GM12878 (cell line): ENCODE measurements at regions of chr5 and their contacts with region 1.

Region 1: GRCh38 chr5:90264689-90265544 is 144.6 kb downstream of the CETN3 start:
- DNase-seq: peak; percentile 41
- ATAC-seq: peak; percentile 88
- H3K4me3 ChIP-seq: peak overlapping the region; percentile 26; the same call in 1 of the 2 replicates
- H3K27ac ChIP-seq: no peak overlapping the region
- H3K4me1 ChIP-seq: peaks cover 5% of the 10 kb centered on the region
- H3K27me3 ChIP-seq: no peaks in the 10 kb centered on the region
- CTCF ChIP-seq: peak; percentile 89 to 96 (median 92)
- EP300 ChIP-seq: no peak
- POLR2A ChIP-seq: no peak
- RAD21 ChIP-seq: peak; percentile 99

Region 2: GRCh38 chr5:88724201-88724600 is 1540.7 kb before region 1 on chr5:
- CTCF ChIA-PET with region 1: interaction called, 45 read pairs
- POLR2A ChIA-PET with region 1: no interaction called
- RAD21 ChIA-PET with region 1: interaction called, 39 read pairs
- SMC1A ChIA-PET with region 1: interaction called, 23 read pairs
- in situ Hi-C with region 1: loop called (anchors 5 kb)
- intact Hi-C with region 1: loop called (anchors 2 kb)
- DNase-seq: no peak
- ATAC-seq: peak; percentile 34; the same call in 2 of the 3 replicates
- H3K4me3 ChIP-seq: no peak overlapping the region
- H3K27ac ChIP-seq: no peak overlapping the region
- H3K4me1 ChIP-seq: no peaks in the 10 kb centered on the region
- H3K27me3 ChIP-seq: no peaks in the 10 kb centered on the region
- CTCF ChIP-seq: peak in 1 of 3 experiments; percentile 13; a peak in 2 of 6 replicates
- EP300 ChIP-seq: no peak
- POLR2A ChIP-seq: no peak
- RAD21 ChIP-seq: no peak

Region 3: DNA sequence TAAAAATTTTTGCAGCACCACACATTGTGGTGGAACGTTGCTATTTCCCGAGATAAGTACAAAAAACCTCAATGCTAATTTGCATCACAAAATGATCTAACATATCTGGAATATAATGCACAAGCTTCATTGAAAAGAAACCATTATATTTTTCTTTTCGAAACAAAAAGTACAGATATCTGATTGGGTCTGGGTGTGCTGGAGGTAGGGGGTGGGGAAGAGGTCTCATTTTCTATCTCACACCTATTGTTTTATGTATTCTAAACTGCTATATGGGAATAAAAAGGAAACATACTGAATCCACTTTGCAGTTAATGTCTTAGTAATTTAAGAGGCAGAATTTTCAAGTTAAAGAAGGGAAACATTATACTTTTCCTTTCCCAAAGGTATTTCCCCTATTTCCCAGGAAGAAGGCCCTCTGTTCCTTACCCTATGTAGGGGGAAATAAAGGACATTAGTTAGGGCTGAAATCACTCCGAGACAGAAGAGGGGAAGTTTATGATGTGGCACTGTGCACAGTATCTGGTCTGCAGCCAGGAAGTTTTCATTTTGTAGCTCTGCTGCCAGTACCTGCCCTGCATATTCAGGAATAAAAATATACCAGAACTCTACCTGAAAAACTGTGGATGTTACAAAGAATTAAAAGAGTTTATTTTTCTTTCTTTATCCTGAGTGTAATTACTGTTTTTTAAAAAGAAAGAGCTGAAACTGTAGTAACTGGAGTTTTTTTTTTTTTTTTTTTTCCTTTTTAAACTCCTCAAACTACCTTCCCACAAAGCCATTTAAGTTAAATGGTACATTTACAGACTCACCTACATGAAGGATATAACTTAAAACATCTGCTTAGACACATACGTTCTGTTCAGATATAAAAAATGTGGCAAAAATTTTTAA is 1389.3 kb before region 1 on chr5:
- CTCF ChIA-PET with region 1: no interaction called
- POLR2A ChIA-PET with region 1: no interaction called
- RAD21 ChIA-PET with region 1: no interaction called
- SMC1A ChIA-PET with region 1: interaction called, 4 read pairs
- in situ Hi-C with region 1: no loop called
- intact Hi-C with region 1: loop called (anchors 5 kb)
- DNase-seq: no peak
- ATAC-seq: peak; percentile 65
- H3K4me3 ChIP-seq: peak overlapping the region; percentile 65
- H3K27ac ChIP-seq: peak overlapping the region; percentile 67
- H3K4me1 ChIP-seq: no peaks in the 10 kb centered on the region
- H3K27me3 ChIP-seq: no peaks in the 10 kb centered on the region
- CTCF ChIP-seq: no peak
- EP300 ChIP-seq: no peak
- POLR2A ChIP-seq: peak; percentile 22; the same call in 1 of the 2 replicates
- RAD21 ChIP-seq: no peak

Region 4: GRCh38 chr5:89729623-89730301 is 535.2 kb before region 1 on chr5:
- CTCF ChIA-PET with region 1: no interaction called
- POLR2A ChIA-PET with region 1: no interaction called
- RAD21 ChIA-PET with region 1: interaction called, 3 read pairs
- SMC1A ChIA-PET with region 1: no interaction called
- in situ Hi-C with region 1: no loop called
- intact Hi-C with region 1: loop called (anchors 10 kb)
- DNase-seq: peak; percentile 34
- ATAC-seq: peak; percentile 76
- H3K4me3 ChIP-seq: no peak overlapping the region
- H3K27ac ChIP-seq: no peak overlapping the region
- H3K4me1 ChIP-seq: peaks cover 7% of the 10 kb centered on the region; the same call in 1 of the 2 replicates
- H3K27me3 ChIP-seq: no peaks in the 10 kb centered on the region
- CTCF ChIP-seq: peak; percentile 26 to 54 (median 27); a peak in 4 of 6 replicates
- EP300 ChIP-seq: no peak
- POLR2A ChIP-seq: no peak
- RAD21 ChIP-seq: peak; percentile 65

Region 5: DNA sequence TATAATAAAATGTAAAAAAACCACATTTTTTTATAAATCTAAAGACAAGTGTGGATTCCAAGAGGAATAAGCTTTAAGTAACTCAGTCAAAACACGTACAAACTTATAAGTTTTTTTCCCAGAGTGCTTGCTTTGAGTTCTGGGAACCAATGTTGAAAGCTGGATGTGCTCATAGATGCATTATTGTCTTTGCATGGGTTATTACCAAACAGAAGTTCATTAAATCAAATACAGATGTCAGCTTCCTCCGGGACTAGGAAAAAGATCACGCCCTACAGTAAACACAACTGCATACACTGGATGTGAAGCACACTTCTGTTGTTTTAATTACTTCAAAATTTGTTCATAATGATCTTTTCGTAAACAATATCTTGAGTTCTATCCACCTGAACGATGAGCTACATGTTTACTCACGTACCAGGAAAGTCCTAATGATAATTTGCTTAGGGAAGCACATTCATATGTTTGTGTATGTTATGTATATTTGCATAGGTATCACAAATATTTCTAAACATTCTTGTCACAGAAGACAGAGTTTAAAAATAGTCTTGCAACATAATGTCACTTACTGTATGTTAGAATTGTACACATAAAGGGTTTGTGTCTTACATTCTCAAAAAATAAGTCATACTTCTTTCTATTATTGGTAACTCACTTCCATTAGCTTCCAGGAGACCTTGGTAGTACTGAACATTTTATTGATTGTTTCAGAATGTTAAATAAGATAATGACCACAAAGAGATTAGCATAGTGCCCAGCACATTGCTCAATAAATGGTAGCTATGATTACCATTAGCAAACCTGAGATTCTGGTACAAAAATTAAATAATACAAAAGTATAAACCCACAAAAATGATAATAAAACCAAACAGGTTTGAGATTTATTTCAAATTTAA is 282.8 kb before region 1 on chr5:
- CTCF ChIA-PET with region 1: interaction called, 13 read pairs
- POLR2A ChIA-PET with region 1: no interaction called
- RAD21 ChIA-PET with region 1: interaction called, 3 read pairs
- SMC1A ChIA-PET with region 1: no interaction called
- in situ Hi-C with region 1: no loop called
- intact Hi-C with region 1: no loop called
- DNase-seq: no peak
- ATAC-seq: no peak
- H3K4me3 ChIP-seq: no peak overlapping the region
- H3K27ac ChIP-seq: no peak overlapping the region
- H3K4me1 ChIP-seq: no peaks in the 10 kb centered on the region
- H3K27me3 ChIP-seq: no peaks in the 10 kb centered on the region
- CTCF ChIP-seq: no peak
- EP300 ChIP-seq: no peak
- POLR2A ChIP-seq: no peak
- RAD21 ChIP-seq: no peak

Region 6: DNA sequence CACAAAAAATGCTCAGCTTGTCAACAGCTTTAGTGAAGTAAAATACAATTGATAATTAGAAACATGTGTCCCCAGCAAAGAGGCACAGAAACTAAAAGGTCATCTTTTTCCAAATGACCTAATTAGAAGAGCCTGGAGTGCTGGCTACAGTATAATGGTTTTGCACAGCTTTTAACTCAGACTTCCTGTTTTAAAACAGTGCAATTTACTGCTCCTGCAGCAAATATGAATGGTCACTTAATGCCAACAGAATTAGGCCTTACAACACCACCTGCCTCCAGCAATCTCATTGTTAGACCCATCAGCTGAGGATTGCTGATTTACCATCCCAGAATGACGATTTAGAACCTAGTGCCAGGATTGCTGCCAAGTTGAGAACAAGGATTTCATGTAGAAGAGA is 94.7 kb before region 1 on chr5:
- CTCF ChIA-PET with region 1: no interaction called
- POLR2A ChIA-PET with region 1: no interaction called
- RAD21 ChIA-PET with region 1: no interaction called
- SMC1A ChIA-PET with region 1: no interaction called
- in situ Hi-C with region 1: no loop called
- intact Hi-C with region 1: no loop called
- DNase-seq: no peak
- ATAC-seq: no peak
- H3K4me3 ChIP-seq: no peak overlapping the region
- H3K27ac ChIP-seq: no peak overlapping the region
- H3K4me1 ChIP-seq: no peaks in the 10 kb centered on the region
- H3K27me3 ChIP-seq: no peaks in the 10 kb centered on the region
- CTCF ChIP-seq: no peak
- EP300 ChIP-seq: no peak
- POLR2A ChIP-seq: no peak
- RAD21 ChIP-seq: no peak

Region 7: DNA sequence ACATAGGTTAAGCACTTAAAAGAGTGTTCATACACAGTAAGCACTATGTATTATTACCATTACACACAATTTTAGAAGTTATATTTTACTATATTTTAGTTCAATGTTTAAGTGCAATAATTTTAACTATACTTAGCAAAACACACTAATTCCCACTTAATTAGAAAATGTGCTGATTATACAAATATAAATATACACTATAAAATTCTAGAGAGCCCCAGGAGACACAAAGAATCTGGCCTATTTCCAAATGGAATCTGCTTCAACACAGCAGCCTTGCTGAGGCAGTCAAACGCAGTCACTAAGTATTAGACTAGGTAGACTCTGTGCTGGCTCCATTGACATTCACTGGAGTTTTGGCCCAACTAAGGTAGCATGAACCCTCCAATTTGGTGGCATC is 16.3 kb before region 1 on chr5:
- CTCF ChIA-PET with region 1: interaction called, 14 read pairs
- POLR2A ChIA-PET with region 1: no interaction called
- RAD21 ChIA-PET with region 1: no interaction called
- SMC1A ChIA-PET with region 1: no interaction called
- in situ Hi-C with region 1: no loop called
- intact Hi-C with region 1: no loop called
- DNase-seq: no peak
- ATAC-seq: no peak
- H3K4me3 ChIP-seq: no peak overlapping the region
- H3K27ac ChIP-seq: no peak overlapping the region
- H3K4me1 ChIP-seq: no peaks in the 10 kb centered on the region
- H3K27me3 ChIP-seq: no peaks in the 10 kb centered on the region
- CTCF ChIP-seq: no peak
- EP300 ChIP-seq: no peak
- POLR2A ChIP-seq: no peak
- RAD21 ChIP-seq: no peak